Heart right ventricle (tissue), 16 donors: ENCODE measurements at regions of chr13 and their contacts with region 1.

Region 1: DNA sequence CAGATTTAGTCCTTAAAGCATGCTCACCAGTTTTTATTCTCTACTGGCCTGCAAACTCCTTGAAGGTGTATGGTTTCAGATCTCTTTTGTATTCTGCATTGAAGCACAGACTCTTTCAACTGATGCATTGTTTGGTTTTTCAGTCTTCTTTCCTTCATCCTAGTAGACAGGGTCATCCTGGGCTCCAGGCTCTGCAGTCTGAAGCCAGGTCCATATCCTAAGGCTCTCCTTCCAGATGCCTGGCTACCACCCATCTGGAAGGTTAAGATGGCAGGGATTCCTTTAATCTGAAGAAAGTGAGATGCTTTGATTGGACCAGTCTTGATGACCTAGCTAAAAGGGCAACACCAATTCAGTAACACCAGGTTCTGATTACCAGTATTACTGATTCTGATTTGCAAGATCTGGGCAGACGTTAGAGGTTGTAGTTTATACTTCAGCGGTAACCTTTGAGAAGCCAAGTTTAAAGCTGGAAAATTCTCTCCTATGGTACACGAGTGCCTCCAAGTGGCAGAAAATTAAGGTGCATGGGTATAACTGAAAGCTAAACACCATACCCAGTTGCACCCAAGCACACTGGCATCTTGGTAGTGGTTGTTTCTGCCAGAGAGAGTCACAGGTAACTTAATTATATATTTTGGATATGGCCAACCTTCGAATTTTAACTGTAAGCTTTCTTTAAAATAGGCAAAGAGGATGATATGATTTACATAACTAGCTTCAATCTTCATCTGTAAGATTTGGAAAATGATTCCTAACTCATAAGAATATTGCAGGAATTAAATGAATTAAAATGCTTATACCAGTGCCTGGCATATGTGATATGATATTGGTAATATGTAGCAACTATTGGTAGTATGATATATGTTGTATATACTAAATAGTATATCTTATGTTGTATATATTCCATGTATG is 1651.9 kb upstream of the MIR17HG start:
- DNase-seq: peak in 1 of 2 donors; percentile 13
- ATAC-seq: peak in 4 of 8 donors; percentile 58 to 74 (median 60)
- H3K4me3 ChIP-seq: no peak overlapping the region
- H3K27ac ChIP-seq: no peak overlapping the region
- H3K4me1 ChIP-seq: no peaks in the 10 kb centered on the region
- H3K27me3 ChIP-seq: no peaks in the 10 kb centered on the region
- CTCF ChIP-seq: peak; percentile 26 to 81 (median 65)

Region 2: GRCh38 chr13:89361909-89362308 is 333.7 kb before region 1 on chr13:
- intact Hi-C with region 1: loop called in 2 of 10 experiments (anchors 5 to 10 kb)
- DNase-seq: no peak
- ATAC-seq: no peak
- H3K4me3 ChIP-seq: no peak overlapping the region
- H3K27ac ChIP-seq: no peak overlapping the region
- H3K4me1 ChIP-seq: no peaks in the 10 kb centered on the region
- H3K27me3 ChIP-seq: no peaks in the 10 kb centered on the region
- CTCF ChIP-seq: peak in 1 of 9 donors; percentile 19

Region 3: DNA sequence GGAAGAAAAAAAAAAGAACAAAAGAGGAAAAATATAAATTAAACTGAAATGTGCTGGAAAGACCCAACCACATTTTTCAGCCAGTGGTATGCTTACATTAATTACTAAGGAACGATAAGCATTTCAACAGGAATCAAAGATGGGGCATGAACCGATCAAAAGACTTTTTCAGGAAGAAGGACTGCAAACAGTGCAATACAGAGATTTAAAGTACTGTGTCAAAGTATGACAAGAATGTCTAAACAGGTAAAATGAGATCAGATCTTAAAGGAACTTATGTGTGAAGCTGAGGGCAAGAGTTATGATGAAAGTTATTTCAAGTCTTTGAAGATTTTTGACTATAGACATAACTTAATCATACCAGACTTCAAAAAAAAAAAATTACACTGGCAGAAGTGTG is 262.6 kb before region 1 on chr13:
- intact Hi-C with region 1: loop called in 3 of 10 experiments (anchors 10 kb)
- DNase-seq: no peak
- ATAC-seq: no peak
- H3K4me3 ChIP-seq: no peak overlapping the region
- H3K27ac ChIP-seq: no peak overlapping the region
- H3K4me1 ChIP-seq: no peaks in the 10 kb centered on the region
- H3K27me3 ChIP-seq: no peaks in the 10 kb centered on the region
- CTCF ChIP-seq: no peak

Region 4: GRCh38 chr13:89827552-89827951 is 132.0 kb after region 1 on chr13:
- intact Hi-C with region 1: no loop called
- DNase-seq: no peak
- ATAC-seq: no peak
- H3K4me3 ChIP-seq: no peak overlapping the region
- H3K27ac ChIP-seq: no peak overlapping the region
- H3K4me1 ChIP-seq: no peaks in the 10 kb centered on the region
- H3K27me3 ChIP-seq: no peaks in the 10 kb centered on the region
- CTCF ChIP-seq: no peak